ENCODE measurements at regions of chr11 and their contacts with region 1.

Region 1: GRCh38 chr11:65988791-65989592 is 13.0 kb downstream of the EIF1AD start:
- DNase-seq: peak; percentile 90
- ATAC-seq: peak; percentile 100
- H3K4me3 ChIP-seq: no peak overlapping the region
- H3K27ac ChIP-seq: no peak overlapping the region
- H3K4me1 ChIP-seq: no peaks in the 10 kb centered on the region
- H3K27me3 ChIP-seq: no peaks in the 10 kb centered on the region
- CTCF ChIP-seq: peak; percentile 92 to 100 (median 99); a peak in 5 of 6 replicates
- EP300 ChIP-seq: no peak
- POLR2A ChIP-seq: no peak; the same call in 1 of the 2 replicates
- RAD21 ChIP-seq: peak; percentile 94

Region 2: GRCh38 chr11:65833297-65834030 is 155.5 kb before region 1 on chr11 and contains the start of gene SNX32:
- CTCF ChIA-PET with region 1: interaction called, 18 read pairs
- POLR2A ChIA-PET with region 1: no interaction called
- RAD21 ChIA-PET with region 1: no interaction called
- SMC1A ChIA-PET with region 1: no interaction called
- in situ Hi-C with region 1: no loop called
- intact Hi-C with region 1: no loop called
- DNase-seq: peak; percentile 73
- ATAC-seq: peak; percentile 100
- H3K4me3 ChIP-seq: peak within 1 kb of the TSS; percentile 64
- H3K27ac ChIP-seq: peak within 1 kb of the TSS; percentile 52; the same call in 1 of the 2 replicates
- H3K4me1 ChIP-seq: peaks cover 15% of the 10 kb centered on the region
- H3K27me3 ChIP-seq: peaks cover 0 to 7% of the 10 kb centered on the region in 2 experiments; a peak in 1 of 4 replicates
- CTCF ChIP-seq: no peak
- EP300 ChIP-seq: no peak
- POLR2A ChIP-seq: peak; percentile 40; the same call in 1 of the 2 replicates
- RAD21 ChIP-seq: no peak
- polyA plus RNA-seq, gene SNX32: 0.04 to 0.06 TPM

Region 3: DNA sequence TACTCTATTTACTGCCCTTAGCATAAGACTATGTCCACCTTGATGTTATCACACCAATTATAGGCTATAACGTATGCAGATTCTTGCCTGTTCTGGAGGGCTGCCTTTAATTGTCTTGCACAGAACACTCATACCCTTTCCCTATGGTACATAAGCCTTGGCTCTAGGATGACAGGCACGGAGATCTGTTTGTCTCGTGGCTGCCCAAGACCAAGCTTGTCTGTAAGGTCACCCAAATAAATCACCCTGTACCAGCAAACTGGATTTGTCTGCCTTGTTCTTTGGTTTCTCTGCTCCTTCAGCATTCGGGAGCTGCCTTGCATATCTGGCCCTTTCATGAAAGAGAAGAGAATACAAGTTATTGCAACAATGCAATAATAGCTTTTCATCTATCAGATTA is 51.2 kb before region 1 on chr11:
- CTCF ChIA-PET with region 1: no interaction called
- POLR2A ChIA-PET with region 1: no interaction called
- RAD21 ChIA-PET with region 1: no interaction called
- SMC1A ChIA-PET with region 1: no interaction called
- in situ Hi-C with region 1: no loop called
- intact Hi-C with region 1: no loop called
- DNase-seq: no peak
- ATAC-seq: no peak
- H3K4me3 ChIP-seq: no peak overlapping the region
- H3K27ac ChIP-seq: no peak overlapping the region
- H3K4me1 ChIP-seq: peaks cover 8% of the 10 kb centered on the region
- H3K27me3 ChIP-seq: no peaks in the 10 kb centered on the region
- CTCF ChIP-seq: no peak
- EP300 ChIP-seq: no peak
- POLR2A ChIP-seq: no peak
- RAD21 ChIP-seq: no peak

Region 4: GRCh38 chr11:65953513-65953912 is 35.5 kb before region 1 on chr11:
- CTCF ChIA-PET with region 1: no interaction called
- POLR2A ChIA-PET with region 1: no interaction called
- RAD21 ChIA-PET with region 1: no interaction called
- SMC1A ChIA-PET with region 1: no interaction called
- in situ Hi-C with region 1: no loop called
- intact Hi-C with region 1: no loop called
- DNase-seq: no peak
- ATAC-seq: no peak
- H3K4me3 ChIP-seq: no peak overlapping the region
- H3K27ac ChIP-seq: no peak overlapping the region
- H3K4me1 ChIP-seq: peaks cover 14% of the 10 kb centered on the region
- H3K27me3 ChIP-seq: no peaks in the 10 kb centered on the region
- CTCF ChIP-seq: no peak
- EP300 ChIP-seq: no peak
- POLR2A ChIP-seq: no peak
- RAD21 ChIP-seq: no peak

Region 5: DNA sequence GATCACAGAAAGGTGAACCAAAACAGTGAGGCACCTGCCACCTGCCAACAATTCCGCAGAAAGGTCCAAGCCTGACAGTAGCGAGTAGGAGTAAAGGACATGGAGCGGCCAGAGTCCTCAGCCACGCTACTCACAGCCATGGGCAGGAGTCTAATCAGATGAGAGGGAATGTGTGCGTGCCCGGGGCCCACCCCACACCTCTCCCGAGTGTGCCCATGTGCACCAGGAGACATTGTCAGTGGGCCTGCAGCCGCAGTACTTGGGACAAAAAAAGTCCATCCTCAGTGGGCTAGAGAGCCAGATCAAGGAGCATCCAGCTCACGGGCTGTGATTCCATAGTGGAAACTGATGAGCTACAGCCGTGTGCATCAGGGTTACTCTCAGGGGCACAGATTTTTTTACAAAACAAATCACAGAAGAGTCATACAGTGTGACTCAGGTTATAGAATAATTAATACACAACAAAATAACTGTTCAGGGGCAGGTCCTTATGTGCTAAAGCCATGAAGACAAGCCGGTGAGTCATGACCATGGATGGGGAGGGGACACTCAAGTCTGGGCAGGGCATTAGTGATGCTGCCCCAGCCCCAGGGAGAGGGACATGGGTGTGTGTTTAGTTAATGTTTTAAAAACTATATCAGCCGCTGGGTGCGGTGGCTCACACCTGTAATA is 15.4 kb before region 1 on chr11:
- CTCF ChIA-PET with region 1: no interaction called
- POLR2A ChIA-PET with region 1: no interaction called
- RAD21 ChIA-PET with region 1: no interaction called
- SMC1A ChIA-PET with region 1: no interaction called
- in situ Hi-C with region 1: no loop called
- intact Hi-C with region 1: no loop called
- DNase-seq: no peak
- ATAC-seq: no peak
- H3K4me3 ChIP-seq: no peak overlapping the region
- H3K27ac ChIP-seq: no peak overlapping the region
- H3K4me1 ChIP-seq: no peaks in the 10 kb centered on the region
- H3K27me3 ChIP-seq: no peaks in the 10 kb centered on the region
- CTCF ChIP-seq: no peak
- EP300 ChIP-seq: no peak
- POLR2A ChIP-seq: no peak
- RAD21 ChIP-seq: no peak